ENCODE measurements at regions of chr15 and their contacts with region 1.

Region 1: GRCh38 chr15:70974004-70974832 is 81.6 kb downstream of the LRRC49 start:
- DNase-seq: peak; percentile 49
- H3K4me3 ChIP-seq: no peak overlapping the region
- CTCF ChIP-seq: peak; percentile 20

Region 2: DNA sequence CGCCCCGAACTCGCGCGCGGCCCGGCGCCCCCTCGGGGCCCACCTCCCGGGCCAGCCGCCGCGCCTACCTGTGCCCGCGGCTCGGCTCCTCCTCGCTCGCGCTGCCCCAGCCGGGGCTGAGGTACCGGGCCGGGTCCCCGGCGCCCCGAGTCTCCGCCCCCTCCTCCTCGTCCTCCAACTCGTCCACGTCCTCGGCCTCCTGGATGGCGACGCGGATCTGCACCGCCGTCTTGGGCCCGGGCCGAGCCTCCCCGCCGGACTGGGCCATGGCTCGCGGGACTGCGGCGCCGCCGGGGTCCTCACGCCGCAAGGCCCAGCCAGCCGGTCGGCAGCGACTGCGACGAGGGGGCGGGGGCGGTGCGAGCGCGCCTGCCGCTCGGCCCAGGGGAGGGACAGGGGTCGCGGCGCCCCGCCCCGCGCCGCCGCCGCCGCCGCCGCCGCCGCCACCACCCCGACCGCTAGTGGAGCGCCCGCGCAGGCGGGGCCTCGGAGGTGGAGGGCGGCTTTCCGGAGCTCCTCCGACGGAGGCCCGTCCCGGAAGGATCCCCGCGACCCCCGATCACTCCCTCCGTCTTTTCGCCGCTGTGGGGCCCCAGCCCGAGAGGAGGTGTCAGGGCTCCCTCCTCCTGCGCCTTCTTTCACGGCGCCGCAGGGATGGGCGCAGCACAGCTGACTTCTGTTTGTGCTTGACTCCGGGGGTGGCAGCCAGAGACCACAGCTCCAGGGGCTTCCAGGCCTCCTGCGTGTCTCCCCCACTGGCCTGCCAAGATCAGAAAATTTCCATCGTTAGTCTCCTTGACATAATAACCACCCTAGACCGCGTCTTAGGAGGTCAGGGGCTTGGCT is 120.2 kb before region 1 on chr15 and contains the start of gene LARP6:
- CTCF ChIA-PET with region 1: no interaction called
- POLR2A ChIA-PET with region 1: no interaction called
- DNase-seq: no peak
- H3K4me3 ChIP-seq: peak within 1 kb of the TSS; percentile 89
- CTCF ChIP-seq: no peak

Region 3: DNA sequence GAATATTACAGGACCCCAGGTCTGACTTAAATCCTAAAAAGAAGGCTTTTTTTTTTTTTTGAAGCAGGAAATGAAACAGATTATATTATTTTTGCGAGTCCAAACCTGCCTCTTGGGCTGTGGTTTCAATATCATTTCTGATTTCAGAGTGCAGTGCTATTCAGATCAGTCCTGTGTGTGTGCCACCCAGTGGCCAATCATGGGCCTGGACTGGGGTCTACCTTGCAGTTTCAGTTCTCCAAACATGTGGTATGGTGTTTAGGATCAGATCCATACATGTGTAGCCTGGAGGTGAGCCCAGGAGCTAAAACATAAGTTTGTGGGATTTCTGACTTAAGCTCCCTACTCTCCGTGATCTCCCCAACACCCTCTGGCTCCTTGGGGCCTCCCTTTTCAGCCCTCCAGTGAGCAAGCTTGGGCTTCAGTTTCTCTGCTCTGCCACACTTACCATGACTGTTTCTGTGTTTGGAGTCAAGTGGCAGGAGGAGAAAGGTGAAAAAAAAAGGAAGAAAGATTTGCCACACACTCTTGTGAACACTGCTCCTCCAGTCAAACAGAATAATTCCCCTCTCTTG is 129.0 kb after region 1 on chr15:
- CTCF ChIA-PET with region 1: interaction called, 63 read pairs
- POLR2A ChIA-PET with region 1: no interaction called
- DNase-seq: no peak
- H3K4me3 ChIP-seq: no peak overlapping the region
- CTCF ChIP-seq: peak; percentile 64

Region 4: DNA sequence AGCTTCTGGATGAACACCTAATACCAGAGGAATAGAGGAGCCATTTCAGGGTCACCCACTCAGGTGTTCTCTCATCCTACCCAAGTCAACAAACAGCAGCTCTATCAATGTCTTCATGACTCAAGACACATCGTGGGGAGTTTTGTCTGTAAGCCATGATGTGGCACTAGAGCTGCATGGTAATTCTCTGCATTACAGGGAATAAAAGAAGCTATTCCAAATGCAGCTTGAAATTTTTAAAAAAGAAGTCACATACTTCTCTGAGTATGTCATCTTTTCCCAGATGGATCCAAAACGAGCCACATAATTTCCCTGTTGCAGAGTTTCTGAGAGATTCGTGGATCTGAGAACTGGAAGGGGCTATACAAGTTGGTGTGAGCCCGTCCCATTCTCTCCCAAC is 134.9 kb after region 1 on chr15:
- CTCF ChIA-PET with region 1: interaction called, 63 read pairs
- POLR2A ChIA-PET with region 1: no interaction called
- DNase-seq: peak; percentile 58
- H3K4me3 ChIP-seq: no peak overlapping the region
- CTCF ChIP-seq: peak; percentile 41

Measured in AG04449 (cell line).